Esophagus squamous epithelium (tissue), 5 donors: ENCODE measurements at regions of chr22 and their contacts with region 1.

Region 1: DNA sequence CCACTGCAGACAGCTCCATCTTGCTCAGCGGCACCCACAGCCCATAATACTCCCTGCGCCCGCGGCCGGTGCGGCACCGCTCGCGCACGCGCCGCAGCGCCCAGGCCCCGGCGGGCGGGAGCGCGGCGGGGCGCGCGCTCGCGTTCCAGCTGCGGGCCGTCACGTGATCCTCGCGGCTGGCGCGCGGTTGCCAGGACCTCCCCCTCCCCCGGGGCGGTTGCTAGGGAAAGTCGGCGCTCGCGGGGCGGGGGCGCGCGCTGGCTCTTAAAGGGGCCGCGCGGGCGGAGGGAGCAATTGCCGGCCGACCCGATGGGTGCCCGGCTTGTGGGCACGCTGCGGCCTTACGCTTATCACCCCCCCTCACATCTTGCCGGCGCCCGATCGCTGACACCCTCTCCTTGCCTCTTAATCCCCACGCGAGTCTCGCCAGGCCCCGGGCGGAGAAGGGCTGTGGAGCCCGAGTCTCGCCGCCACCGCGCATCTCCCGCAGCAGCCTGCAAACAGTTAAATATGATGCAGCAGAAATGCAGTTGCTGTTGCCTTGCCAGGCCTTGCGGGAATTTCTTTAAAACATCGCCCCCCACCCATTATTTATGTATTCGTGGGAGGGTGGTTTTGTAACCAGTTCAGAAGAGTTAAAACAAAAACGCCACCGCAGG is at the start of gene CBX6:
- DNase-seq: peak; percentile 58
- H3K4me3 ChIP-seq: peak within 1 kb of the TSS; percentile 47 to 94 (median 78)
- H3K27ac ChIP-seq: peak within 1 kb of the TSS; percentile 81 to 98 (median 93)
- H3K4me1 ChIP-seq: peaks cover 24 to 65% (median 32%) of the 10 kb centered on the region in 3 donors
- H3K27me3 ChIP-seq: peaks cover 0 to 6% (median 0%) of the 10 kb centered on the region in 4 donors
- CTCF ChIP-seq: no peak
- POLR2A ChIP-seq: peak in 1 of 4 donors; percentile 37
- total RNA-seq, gene CBX6: 7.8 to 27.7 (median 11.8) TPM

Region 2: GRCh38 chr22:38700789-38701628 is 171.3 kb before region 1 on chr22 and contains the start of gene JOSD1:
- intact Hi-C with region 1: no loop called
- DNase-seq: peak; percentile 58
- H3K4me3 ChIP-seq: peak within 1 kb of the TSS; percentile 59 to 84 (median 75)
- H3K27ac ChIP-seq: peak within 1 kb of the TSS; percentile 96 to 99 (median 99)
- H3K4me1 ChIP-seq: peaks cover 44 to 62% (median 48%) of the 10 kb centered on the region in 3 donors
- H3K27me3 ChIP-seq: no peaks in the 10 kb centered on the region
- CTCF ChIP-seq: peak in 2 of 6 experiments; percentile 19 to 36
- POLR2A ChIP-seq: peak in 3 of 4 donors; percentile 94 to 100 (median 100)
- total RNA-seq, gene JOSD1: 27.8 to 48.8 (median 33.1) TPM

Region 3: GRCh38 chr22:38751422-38752346 is 120.6 kb before region 1 on chr22:
- intact Hi-C with region 1: no loop called
- DNase-seq: peak; percentile 41
- H3K4me3 ChIP-seq: peak overlapping the region in 2 of 4 donors; percentile 19 to 28
- H3K27ac ChIP-seq: peak overlapping the region; percentile 43 to 100 (median 69)
- H3K4me1 ChIP-seq: peaks cover 46 to 88% (median 57%) of the 10 kb centered on the region in 3 donors
- H3K27me3 ChIP-seq: no peaks in the 10 kb centered on the region
- CTCF ChIP-seq: peak in 1 of 6 experiments; percentile 16
- POLR2A ChIP-seq: no peak

Region 4: GRCh38 chr22:38927033-38927781 is 54.9 kb after region 1 on chr22:
- intact Hi-C with region 1: loop called (anchors 10 kb)
- DNase-seq: no peak
- H3K4me3 ChIP-seq: peak overlapping the region in 3 of 4 donors; percentile 29 to 63 (median 38)
- H3K27ac ChIP-seq: peak overlapping the region; percentile 36 to 74 (median 68)
- H3K4me1 ChIP-seq: peaks cover 27 to 47% (median 34%) of the 10 kb centered on the region in 3 donors
- H3K27me3 ChIP-seq: peaks cover 0 to 12% (median 0%) of the 10 kb centered on the region in 4 donors
- CTCF ChIP-seq: peak; percentile 30 to 62 (median 54)
- POLR2A ChIP-seq: no peak

Region 5: DNA sequence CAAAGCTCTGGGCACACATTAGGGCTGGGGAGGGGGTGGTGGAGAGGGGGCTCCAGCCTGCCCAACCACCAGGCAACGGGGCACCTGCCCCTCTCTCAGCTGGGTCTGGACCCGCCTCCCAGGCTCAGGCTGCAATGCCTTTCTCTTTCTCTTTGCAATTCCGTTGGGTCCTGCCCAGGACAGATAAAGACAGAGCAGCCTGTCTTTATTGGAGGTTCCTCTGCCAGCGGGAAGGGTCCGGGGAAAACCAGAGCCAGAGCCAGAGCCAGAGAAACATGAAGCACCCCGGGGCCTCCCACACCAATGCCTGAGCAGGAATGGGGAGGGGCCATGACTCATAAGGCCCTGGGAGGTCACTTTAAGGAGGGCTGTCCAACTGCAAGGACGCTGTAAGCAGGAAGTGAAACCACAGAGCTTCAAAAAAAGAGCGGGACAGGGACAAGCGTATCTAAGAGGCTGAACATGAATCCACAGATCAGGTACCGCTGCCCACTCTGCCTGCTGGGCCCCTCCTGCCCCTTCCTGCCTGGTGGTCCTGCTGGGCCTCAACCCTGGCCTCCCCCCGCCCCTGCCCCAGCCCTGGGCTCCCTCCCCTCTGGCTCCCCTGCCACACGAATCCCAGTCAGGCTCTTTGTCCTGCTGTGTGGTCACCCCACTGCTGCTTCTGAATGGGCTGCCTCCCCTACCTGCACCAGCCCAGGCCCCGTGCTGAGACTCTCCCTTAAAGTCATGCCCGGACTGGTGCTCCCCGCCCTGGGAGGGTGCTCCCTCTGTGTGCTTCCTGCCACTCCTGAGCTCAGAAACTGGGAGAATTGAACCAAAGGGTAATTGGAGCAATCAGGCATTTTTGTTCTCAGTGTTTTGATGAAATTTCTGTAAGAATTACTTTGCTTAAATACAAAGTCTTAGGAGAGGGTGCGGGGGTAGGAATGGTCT is 110.0 kb after region 1 on chr22 and contains the start of gene APOBEC3B:
- intact Hi-C with region 1: loop called (anchors 10 kb)
- DNase-seq: peak; percentile 54
- H3K4me3 ChIP-seq: peak within 1 kb of the TSS in 3 of 4 donors; percentile 23 to 69 (median 43)
- H3K27ac ChIP-seq: peak within 1 kb of the TSS in 3 of 4 donors; percentile 74 to 86 (median 76)
- H3K4me1 ChIP-seq: peaks cover 0 to 42% (median 16%) of the 10 kb centered on the region in 3 donors
- H3K27me3 ChIP-seq: no peaks in the 10 kb centered on the region
- CTCF ChIP-seq: no peak
- POLR2A ChIP-seq: peak in 1 of 4 donors; percentile 49
- total RNA-seq, gene APOBEC3B: 1.1 to 5.3 (median 3.1) TPM in 3 of 4 donors, not detected in the other

Region 6: GRCh38 chr22:39003165-39003638 is 130.9 kb after region 1 on chr22:
- intact Hi-C with region 1: loop called (anchors 10 kb)
- DNase-seq: no peak
- H3K4me3 ChIP-seq: no peak overlapping the region
- H3K27ac ChIP-seq: no peak overlapping the region
- H3K4me1 ChIP-seq: peaks cover 0 to 9% (median 3%) of the 10 kb centered on the region in 3 donors
- H3K27me3 ChIP-seq: peaks cover 0 to 12% (median 0%) of the 10 kb centered on the region in 4 donors
- CTCF ChIP-seq: peak; percentile 67 to 79 (median 74)
- POLR2A ChIP-seq: no peak

Region 7: DNA sequence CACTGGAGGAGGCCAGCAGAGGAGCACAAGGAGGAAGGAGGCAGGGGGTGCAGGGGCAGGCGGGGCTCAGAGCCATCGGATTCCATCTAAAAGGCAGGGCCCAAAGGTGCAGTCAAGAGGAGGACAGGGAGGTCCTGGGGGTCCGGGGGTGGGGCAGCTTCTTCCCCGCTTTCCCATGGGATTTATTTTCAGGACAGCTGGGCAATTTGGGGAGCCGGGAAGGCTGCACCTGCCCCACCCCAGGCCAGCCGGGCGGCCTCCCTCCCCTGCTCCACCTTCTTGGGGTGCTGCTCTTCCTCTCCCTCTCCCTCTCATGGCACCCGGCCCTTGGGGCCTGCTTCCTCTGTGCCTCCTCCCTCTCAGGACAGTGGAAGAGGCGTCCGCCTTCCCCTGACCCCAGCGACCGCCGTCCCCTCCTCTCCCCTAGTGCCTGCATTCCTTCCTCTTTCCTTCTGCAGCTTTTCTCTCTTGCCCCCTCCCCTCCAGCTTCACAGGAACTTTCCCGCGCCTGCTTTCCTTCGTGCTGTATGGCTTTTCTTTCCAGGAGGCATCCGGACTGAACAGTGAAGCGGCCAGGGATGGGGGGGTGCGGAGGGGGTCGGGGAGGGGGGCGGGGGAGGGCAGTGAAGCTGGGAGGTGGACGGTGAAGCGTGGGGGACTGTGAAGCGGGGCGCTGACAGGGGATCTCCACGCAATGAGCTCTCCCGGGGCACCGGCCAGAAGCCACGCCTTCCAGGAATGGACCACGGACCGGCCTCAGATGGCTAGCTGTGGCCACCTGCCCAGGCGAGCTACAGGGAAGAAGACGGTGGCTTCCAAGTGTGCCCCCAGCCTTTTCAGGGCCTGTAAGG is 251.7 kb after region 1 on chr22:
- intact Hi-C with region 1: loop called (anchors 10 kb)
- DNase-seq: no peak
- H3K4me3 ChIP-seq: no peak overlapping the region
- H3K27ac ChIP-seq: no peak overlapping the region
- H3K4me1 ChIP-seq: peaks cover 0 to 5% (median 0%) of the 10 kb centered on the region in 3 donors
- H3K27me3 ChIP-seq: peaks cover 0 to 8% (median 0%) of the 10 kb centered on the region in 4 donors
- CTCF ChIP-seq: no peak
- POLR2A ChIP-seq: no peak